HepG2 (cell line): ENCODE measurements at regions of chr1 and their contacts with region 1.

Region 1: GRCh38 chr1:165717918-165718515 is 19.7 kb upstream of the ALDH9A1 start:
- DNase-seq: peak; percentile 69
- ATAC-seq: peak; percentile 89
- H3K4me3 ChIP-seq: no peak overlapping the region
- H3K27ac ChIP-seq: no peak overlapping the region
- H3K4me1 ChIP-seq: peaks cover 25% of the 10 kb centered on the region
- H3K27me3 ChIP-seq: no peaks in the 10 kb centered on the region
- CTCF ChIP-seq: peak; percentile 87
- EP300 ChIP-seq: no peak
- POLR2A ChIP-seq: no peak
- RAD21 ChIP-seq: peak; percentile 75

Region 2: GRCh38 chr1:165562571-165562970 is 155.4 kb before region 1 on chr1:
- CTCF ChIA-PET with region 1: no interaction called
- POLR2A ChIA-PET with region 1: no interaction called
- in situ Hi-C with region 1: no loop called
- intact Hi-C with region 1: no loop called
- DNase-seq: no peak
- ATAC-seq: no peak
- H3K4me3 ChIP-seq: no peak overlapping the region
- H3K27ac ChIP-seq: no peak overlapping the region
- H3K4me1 ChIP-seq: no peaks in the 10 kb centered on the region
- H3K27me3 ChIP-seq: peaks cover 1 to 6% of the 10 kb centered on the region in 2 experiments; a peak in 3 of 5 replicates
- CTCF ChIP-seq: no peak
- EP300 ChIP-seq: no peak
- POLR2A ChIP-seq: no peak
- RAD21 ChIP-seq: no peak

Region 3: DNA sequence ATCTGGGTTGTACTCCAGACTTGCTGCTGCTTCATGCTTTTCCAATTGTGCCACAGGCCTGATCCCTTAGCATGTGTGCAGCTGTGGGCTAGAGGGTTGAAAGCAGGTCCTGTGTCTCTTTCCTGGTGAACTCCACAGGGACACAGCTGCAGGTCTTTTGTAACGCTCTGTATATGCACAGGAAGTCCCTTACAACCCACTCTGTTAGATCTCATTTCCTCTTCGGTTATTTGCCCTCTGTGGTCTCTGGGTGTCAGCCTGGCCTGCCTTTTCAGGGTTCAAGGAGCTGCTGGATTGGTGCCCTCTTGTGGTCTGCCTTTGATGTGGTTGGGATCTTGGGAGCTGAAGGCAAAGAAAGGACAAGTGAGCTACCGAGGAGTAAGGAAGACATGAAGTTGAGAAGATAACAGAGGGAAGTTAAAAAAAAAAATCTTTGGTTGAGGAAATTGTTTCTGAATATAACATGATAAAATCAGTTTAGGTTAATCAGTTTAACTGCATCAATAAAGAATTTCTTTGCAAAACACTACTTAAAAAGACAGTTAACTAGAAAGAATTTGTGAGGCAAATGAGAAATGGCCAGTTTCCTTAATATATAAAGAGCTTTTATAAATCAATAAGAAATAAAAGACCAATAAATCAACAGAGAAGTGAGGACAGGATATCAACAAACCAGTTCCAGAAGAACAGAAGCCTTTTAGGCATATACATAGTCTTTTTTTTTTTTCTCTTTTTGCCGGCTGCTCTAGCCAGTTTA is 153.5 kb after region 1 on chr1:
- CTCF ChIA-PET with region 1: interaction called, 7 read pairs
- POLR2A ChIA-PET with region 1: no interaction called
- in situ Hi-C with region 1: no loop called
- intact Hi-C with region 1: loop called (anchors 1 kb)
- DNase-seq: peak; percentile 92
- ATAC-seq: peak; percentile 99
- H3K4me3 ChIP-seq: no peak overlapping the region
- H3K27ac ChIP-seq: peak overlapping the region; percentile 67
- H3K4me1 ChIP-seq: peaks cover 35% of the 10 kb centered on the region
- H3K27me3 ChIP-seq: no peaks in the 10 kb centered on the region
- CTCF ChIP-seq: peak; percentile 92
- EP300 ChIP-seq: peak in 1 of 2 experiments; percentile 35; a peak in 1 of 4 replicates
- POLR2A ChIP-seq: no peak
- RAD21 ChIP-seq: peak; percentile 64

Region 4: DNA sequence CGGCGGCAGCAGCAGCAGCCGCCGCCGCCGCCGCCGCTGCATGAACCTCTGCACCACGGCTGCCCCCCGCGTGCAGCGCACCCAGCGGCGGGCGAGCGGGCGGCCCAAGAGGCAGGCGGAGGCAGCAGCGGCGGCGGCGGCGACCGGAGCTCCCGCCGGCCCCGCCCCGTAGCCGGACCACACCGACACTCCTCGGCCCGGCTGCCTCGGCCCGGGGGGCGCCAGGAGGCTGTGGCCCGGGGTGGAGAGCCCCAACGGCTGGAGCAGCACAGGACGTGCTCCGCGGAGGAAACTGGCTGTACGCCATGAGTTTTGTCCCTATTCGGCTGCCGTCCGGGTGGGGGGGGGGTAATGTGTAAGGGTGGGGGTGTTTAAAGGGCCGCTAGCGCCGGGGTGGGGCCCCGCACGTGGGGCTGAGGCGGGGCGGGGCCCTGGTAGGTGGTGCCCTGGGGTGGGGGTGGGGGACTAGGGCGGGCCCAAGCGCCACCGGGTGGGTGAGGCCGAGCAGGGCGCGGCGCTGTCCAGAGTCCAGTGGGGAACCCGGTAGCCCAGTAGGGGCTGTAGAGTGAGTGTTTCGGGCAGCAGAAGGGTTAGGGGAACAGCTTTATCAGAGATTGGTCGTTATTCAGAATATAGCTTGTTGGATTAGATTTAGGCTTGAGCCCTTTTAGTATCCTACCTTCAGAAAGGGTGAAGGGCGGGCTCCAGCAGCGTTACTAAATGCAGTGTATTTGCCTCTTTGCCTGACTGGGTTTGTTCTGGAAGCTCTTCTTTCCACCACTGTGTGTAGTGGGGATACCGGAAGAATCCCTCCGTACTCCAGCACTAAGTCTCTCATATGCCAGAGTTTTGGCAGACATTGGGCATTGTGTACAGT is 448.9 kb after region 1 on chr1 and contains the start of gene FAM78B:
- CTCF ChIA-PET with region 1: no interaction called
- POLR2A ChIA-PET with region 1: no interaction called
- in situ Hi-C with region 1: loop called (anchors 25 kb)
- intact Hi-C with region 1: no loop called
- DNase-seq: peak; percentile 54
- ATAC-seq: peak; percentile 89
- H3K4me3 ChIP-seq: peak within 1 kb of the TSS; percentile 49 to 69 (median 64)
- H3K27ac ChIP-seq: no peak within 1 kb of the TSS
- H3K4me1 ChIP-seq: peaks cover 17% of the 10 kb centered on the region
- H3K27me3 ChIP-seq: peaks cover 2 to 26% of the 10 kb centered on the region in 2 experiments; a peak in 3 of 5 replicates
- CTCF ChIP-seq: no peak
- EP300 ChIP-seq: no peak
- POLR2A ChIP-seq: no peak
- RAD21 ChIP-seq: no peak
- total RNA-seq, gene FAM78B: 0.29 and 0.31 TPM in 2 replicates